WTC11 (cell line): ENCODE measurements at regions of chr1 and their contacts with region 1.

Region 1: GRCh38 chr1:21270086-21270689 is 20.1 kb downstream of the ECE1 start:
- DNase-seq: peak; percentile 96
- ATAC-seq: peak; percentile 96
- H3K4me3 Mint-ChIP-seq: no peak overlapping the region
- H3K27ac Mint-ChIP-seq: no peak overlapping the region
- H3K4me1 Mint-ChIP-seq: peaks cover 2% of the 10 kb centered on the region; the same call in 1 of the 2 replicates
- H3K27me3 Mint-ChIP-seq: no peaks in the 10 kb centered on the region
- CTCF ChIP-seq: peak; percentile 96

Region 2: GRCh38 chr1:21077085-21077484 is 193.1 kb before region 1 on chr1:
- CTCF ChIA-PET with region 1: no interaction called
- POLR2A ChIA-PET with region 1: no interaction called
- DNase-seq: no peak
- ATAC-seq: no peak
- H3K4me3 Mint-ChIP-seq: no peak overlapping the region
- H3K27ac Mint-ChIP-seq: no peak overlapping the region
- H3K4me1 Mint-ChIP-seq: peaks cover 8% of the 10 kb centered on the region
- H3K27me3 Mint-ChIP-seq: no peaks in the 10 kb centered on the region
- CTCF ChIP-seq: no peak

Region 3: DNA sequence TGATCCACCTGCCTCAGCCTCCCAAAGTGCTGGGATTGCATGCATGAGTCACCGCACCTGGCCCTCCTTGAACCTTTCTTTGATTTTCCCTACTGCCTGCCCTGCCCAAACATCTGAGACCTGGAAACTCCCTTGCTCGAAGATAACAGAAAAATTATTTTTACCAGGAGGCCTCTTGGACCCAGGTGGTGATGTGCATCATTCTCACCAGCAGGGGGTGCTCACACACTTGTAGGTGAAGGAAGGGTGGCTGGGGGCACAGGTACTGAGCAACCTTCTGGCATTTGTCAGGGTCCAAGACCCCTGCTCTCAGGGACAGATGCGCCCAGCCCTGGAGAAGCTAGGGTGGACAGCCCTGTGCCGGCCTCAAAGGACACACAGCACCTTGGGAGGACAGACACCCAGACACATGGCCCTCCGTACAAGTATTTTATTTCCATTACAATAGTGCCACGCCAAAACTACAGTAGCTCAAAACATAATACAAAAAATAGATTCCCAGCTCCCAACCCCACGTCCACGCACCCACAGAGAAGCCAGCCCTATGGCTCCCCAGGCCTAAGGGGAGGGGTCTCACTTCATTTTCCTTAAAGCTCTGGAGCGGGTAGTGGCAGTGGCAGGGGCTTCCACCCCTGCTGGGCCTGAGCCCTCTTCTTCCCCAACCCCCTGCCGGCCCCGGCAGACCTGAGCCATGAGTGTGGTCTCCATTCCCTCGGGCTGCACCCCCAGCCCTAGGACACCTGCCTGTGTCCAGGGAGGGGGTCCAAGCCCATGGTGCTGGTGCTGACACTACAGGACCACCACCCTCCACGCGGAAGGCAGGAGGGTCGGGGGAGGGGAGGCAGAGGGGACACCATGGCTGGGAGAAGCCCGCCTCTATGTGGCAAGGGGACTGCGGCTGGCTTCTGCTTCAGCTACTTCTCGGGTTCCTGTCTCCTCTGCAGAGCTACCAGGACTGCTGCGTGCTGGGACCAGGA is 53.1 kb before region 1 on chr1:
- CTCF ChIA-PET with region 1: interaction called, 23 read pairs
- POLR2A ChIA-PET with region 1: no interaction called
- DNase-seq: peak; percentile 81
- ATAC-seq: peak; percentile 34
- H3K4me3 Mint-ChIP-seq: no peak overlapping the region
- H3K27ac Mint-ChIP-seq: no peak overlapping the region
- H3K4me1 Mint-ChIP-seq: peaks cover 7% of the 10 kb centered on the region; the same call in 1 of the 2 replicates
- H3K27me3 Mint-ChIP-seq: no peaks in the 10 kb centered on the region
- CTCF ChIP-seq: peak; percentile 76

Region 4: GRCh38 chr1:21244986-21245687 is 25.1 kb before region 1 on chr1:
- CTCF ChIA-PET with region 1: interaction called, 69 read pairs
- POLR2A ChIA-PET with region 1: no interaction called
- DNase-seq: peak; percentile 67
- ATAC-seq: peak; percentile 88
- H3K4me3 Mint-ChIP-seq: no peak overlapping the region
- H3K27ac Mint-ChIP-seq: no peak overlapping the region
- H3K4me1 Mint-ChIP-seq: peaks cover 7% of the 10 kb centered on the region
- H3K27me3 Mint-ChIP-seq: no peaks in the 10 kb centered on the region
- CTCF ChIP-seq: peak; percentile 66

Region 5: DNA sequence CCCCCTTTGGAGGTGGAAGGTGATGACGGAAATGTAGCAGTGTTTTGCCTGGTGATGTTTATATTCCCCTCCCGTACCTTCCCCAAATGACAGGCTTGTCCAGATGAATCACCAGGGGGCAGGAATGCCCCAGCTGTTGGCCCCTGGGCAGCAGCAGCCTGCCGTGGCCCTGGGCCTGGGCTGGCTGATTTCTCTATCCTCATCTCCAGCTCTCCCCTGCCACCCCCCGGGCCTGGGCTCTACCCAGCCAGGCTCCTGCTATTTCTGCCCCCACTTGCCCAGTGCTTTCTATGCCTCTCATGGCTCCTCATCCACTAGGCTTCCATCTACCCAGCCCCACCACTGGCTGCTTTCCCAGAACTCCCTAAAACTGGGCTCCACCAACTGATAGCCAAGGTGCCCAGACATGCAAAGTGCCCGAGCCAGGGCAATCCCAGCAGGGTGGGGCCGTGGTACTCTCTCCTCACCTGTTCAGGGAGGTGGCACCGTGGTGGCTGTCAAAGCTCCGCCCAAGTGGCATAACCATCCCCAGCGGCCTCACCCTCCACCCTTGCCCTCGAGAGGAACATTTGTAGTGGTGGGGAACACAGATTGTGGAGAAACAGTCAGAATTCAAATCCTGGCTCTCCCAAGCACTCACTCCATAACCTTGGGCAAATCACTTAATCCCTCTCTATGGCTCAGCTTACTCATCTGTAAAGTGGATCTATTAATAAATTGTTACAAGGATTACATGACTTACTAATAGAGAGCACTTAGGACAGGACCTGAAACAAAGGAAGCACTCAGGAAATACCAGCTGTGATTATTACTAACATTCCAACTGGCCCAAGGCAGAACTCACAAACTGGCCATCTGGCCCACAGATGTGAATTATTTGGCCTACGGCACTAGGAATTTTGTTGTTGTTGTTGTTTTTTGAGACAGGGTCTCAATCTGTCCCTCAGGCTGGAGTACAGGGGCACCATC is 32.8 kb after region 1 on chr1:
- CTCF ChIA-PET with region 1: interaction called, 125 read pairs
- POLR2A ChIA-PET with region 1: no interaction called
- DNase-seq: no peak
- ATAC-seq: no peak
- H3K4me3 Mint-ChIP-seq: no peak overlapping the region
- H3K27ac Mint-ChIP-seq: peak overlapping the region; percentile 21; the same call in 1 of the 2 replicates
- H3K4me1 Mint-ChIP-seq: peaks cover 47% of the 10 kb centered on the region
- H3K27me3 Mint-ChIP-seq: no peaks in the 10 kb centered on the region
- CTCF ChIP-seq: no peak

Region 6: DNA sequence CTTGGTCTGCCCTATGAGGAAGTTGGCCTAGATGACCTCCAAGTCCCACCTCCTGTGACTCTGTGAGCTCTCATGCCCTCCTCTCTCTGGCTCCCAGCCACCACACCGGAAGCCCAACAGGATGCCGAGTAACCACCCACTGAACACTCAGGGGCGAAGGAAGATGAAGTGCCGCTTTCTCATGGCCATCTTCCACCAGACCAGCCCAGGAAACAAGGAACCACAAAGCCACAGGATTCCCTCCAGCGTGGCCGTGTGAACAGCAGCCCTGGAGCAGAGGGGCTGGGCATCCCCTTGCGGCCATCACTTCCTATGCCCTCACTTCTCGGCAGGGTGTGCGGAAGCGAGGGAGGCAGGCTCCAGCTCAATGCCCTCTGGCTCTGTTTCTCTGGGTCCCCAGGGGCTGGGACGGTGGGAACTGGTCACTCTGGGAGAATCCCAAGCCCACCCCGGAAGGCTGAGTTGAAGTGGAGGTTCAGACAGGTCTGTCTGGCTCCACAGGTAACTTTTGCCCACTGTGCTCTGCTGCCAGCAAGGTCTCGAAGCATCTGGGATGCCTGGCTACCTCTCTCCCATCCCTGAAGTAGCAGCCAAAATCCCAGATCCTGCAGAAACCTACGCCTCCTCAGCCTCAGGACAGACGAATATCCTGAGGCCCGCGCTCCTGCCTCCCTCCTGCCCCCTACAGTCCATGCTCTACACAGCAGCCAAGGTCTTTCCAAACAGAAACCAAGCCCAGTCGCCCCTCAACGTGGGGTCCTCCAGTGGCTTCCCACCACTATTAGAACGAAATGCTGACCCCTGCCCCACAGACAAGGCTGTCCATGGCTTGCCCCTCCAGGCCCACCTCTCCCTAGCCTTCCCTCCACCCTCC is 64.3 kb after region 1 on chr1:
- CTCF ChIA-PET with region 1: interaction called, 143 read pairs
- POLR2A ChIA-PET with region 1: no interaction called
- DNase-seq: peak; percentile 84
- ATAC-seq: peak; percentile 86
- H3K4me3 Mint-ChIP-seq: peak overlapping the region; percentile 59
- H3K27ac Mint-ChIP-seq: peak overlapping the region; percentile 84
- H3K4me1 Mint-ChIP-seq: peaks cover 61% of the 10 kb centered on the region
- H3K27me3 Mint-ChIP-seq: no peaks in the 10 kb centered on the region; the same call in 1 of the 2 replicates
- CTCF ChIP-seq: peak; percentile 65; the same call in 1 of the 2 replicates

Region 7: GRCh38 chr1:21355956-21356355 is 85.8 kb after region 1 on chr1:
- CTCF ChIA-PET with region 1: interaction called, 17 read pairs
- POLR2A ChIA-PET with region 1: no interaction called
- DNase-seq: no peak
- ATAC-seq: no peak
- H3K4me3 Mint-ChIP-seq: no peak overlapping the region
- H3K27ac Mint-ChIP-seq: no peak overlapping the region; the same call in 1 of the 2 replicates
- H3K4me1 Mint-ChIP-seq: no peaks in the 10 kb centered on the region
- H3K27me3 Mint-ChIP-seq: no peaks in the 10 kb centered on the region; the same call in 1 of the 2 replicates
- CTCF ChIP-seq: no peak